A673 (cell line): ENCODE measurements at regions of chr5 and their contacts with region 1.

Region 1: DNA sequence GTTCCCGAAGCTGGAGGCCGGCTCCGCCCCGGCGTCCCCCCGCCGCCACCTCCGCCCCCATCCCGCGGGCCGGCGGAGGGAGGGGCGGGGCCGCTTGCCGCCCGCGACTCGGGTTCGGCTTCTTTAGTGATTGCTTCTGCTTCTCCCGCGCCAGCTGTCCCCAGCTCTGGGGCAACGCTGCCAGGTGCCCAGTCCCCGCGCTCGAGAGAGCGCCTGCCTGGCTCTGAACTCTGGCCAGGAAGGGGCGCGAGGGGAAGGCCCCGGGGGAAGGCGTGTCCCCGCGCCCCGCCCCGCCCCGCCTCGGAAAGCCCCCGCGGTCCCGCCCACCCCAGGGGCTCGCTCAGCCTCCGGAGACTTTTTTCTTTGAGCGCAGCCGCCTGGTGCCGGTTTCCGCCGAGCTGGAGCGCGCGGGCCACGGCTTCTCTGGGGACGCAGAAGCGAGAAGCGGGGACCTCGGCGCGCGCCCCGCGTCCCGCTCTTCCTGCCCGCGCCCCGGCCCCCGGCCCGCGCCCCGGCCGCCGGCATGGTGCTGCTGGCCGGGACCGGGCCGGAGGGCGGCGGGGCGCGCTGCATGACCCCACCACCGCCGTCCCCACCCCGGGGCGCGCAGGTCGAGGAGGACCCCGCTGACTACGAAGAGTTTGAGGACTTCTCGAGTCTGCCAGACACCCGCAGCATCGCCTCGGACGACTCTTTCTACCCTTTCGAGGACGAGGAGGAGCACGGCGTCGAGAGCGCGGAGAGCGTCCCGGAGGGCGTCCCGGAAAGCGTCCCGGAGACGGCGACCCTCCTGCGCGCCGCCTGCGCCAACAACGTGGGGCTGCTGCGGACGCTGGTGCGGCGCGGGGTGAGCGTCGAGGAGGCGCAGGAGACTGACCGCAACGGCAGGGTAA is at the start of gene ANKRD33B:
- DNase-seq: peak; percentile 77
- H3K4me3 ChIP-seq: peak within 1 kb of the TSS; percentile 74
- H3K27ac ChIP-seq: peak within 1 kb of the TSS; percentile 16
- H3K4me1 ChIP-seq: peaks cover 14% of the 10 kb centered on the region
- H3K27me3 ChIP-seq: peaks cover 28% of the 10 kb centered on the region
- CTCF ChIP-seq: no peak
- total RNA-seq, gene ANKRD33B: 0.75 and 1.1 TPM in 2 replicates

Region 2: DNA sequence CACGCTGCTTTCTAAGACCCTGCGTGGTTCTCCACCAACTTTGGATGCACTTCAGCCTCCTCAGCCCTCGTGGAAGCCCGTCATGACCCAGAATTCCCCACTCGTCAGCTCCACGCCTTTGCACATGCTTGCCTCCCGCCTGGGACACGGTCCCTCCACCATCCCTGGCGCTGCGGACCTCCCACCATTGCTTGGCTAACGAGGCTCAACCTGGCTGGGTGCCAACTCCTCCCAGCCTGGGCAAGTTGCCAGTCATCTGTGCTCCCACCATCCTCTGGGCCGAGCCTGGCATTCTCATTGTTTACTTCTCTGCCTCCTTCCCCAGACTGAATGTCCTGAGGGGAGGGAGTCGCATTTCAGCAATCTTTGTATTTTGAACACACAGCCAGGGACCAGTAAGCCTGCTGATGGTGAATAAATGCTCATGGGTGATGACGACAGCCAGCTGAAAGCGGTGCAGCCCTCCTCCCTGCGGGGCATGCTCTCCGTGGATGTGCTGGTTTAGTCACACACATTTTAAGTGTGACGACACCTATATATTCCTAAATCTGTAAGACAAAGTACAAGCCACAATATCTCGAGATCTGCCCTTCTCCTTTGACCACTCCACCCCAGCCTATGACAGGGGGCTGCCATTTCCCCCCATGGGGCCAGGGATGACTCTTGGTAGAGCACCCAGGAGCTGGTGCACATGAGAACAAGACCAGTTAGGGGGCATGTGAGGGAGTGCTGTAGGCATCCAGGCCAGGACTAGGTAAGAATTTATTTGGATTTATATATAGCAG is 37.2 kb after region 1 on chr5:
- CTCF ChIA-PET with region 1: no interaction called
- POLR2A ChIA-PET with region 1: interaction called, 11 read pairs
- intact Hi-C with region 1: no loop called
- DNase-seq: peak; percentile 89
- H3K4me3 ChIP-seq: no peak overlapping the region
- H3K27ac ChIP-seq: no peak overlapping the region
- H3K4me1 ChIP-seq: peaks cover 6% of the 10 kb centered on the region
- H3K27me3 ChIP-seq: no peaks in the 10 kb centered on the region
- CTCF ChIP-seq: no peak

Region 3: GRCh38 chr5:10621832-10622231 is 57.6 kb after region 1 on chr5:
- CTCF ChIA-PET with region 1: interaction called, 11 read pairs
- POLR2A ChIA-PET with region 1: no interaction called
- intact Hi-C with region 1: no loop called
- DNase-seq: no peak
- H3K4me3 ChIP-seq: no peak overlapping the region
- H3K27ac ChIP-seq: no peak overlapping the region
- H3K4me1 ChIP-seq: peaks cover 1% of the 10 kb centered on the region
- H3K27me3 ChIP-seq: peaks cover 4% of the 10 kb centered on the region
- CTCF ChIP-seq: no peak

Region 4: GRCh38 chr5:10724799-10725507 is 160.8 kb after region 1 on chr5:
- CTCF ChIA-PET with region 1: no interaction called
- POLR2A ChIA-PET with region 1: no interaction called
- intact Hi-C with region 1: loop called (anchors 10 kb)
- DNase-seq: peak; percentile 20
- H3K4me3 ChIP-seq: no peak overlapping the region
- H3K27ac ChIP-seq: no peak overlapping the region
- H3K4me1 ChIP-seq: no peaks in the 10 kb centered on the region
- H3K27me3 ChIP-seq: no peaks in the 10 kb centered on the region
- CTCF ChIP-seq: no peak